GM10248 (cell line): ENCODE measurements at regions of chr1 and their contacts with region 1.

Region 1: DNA sequence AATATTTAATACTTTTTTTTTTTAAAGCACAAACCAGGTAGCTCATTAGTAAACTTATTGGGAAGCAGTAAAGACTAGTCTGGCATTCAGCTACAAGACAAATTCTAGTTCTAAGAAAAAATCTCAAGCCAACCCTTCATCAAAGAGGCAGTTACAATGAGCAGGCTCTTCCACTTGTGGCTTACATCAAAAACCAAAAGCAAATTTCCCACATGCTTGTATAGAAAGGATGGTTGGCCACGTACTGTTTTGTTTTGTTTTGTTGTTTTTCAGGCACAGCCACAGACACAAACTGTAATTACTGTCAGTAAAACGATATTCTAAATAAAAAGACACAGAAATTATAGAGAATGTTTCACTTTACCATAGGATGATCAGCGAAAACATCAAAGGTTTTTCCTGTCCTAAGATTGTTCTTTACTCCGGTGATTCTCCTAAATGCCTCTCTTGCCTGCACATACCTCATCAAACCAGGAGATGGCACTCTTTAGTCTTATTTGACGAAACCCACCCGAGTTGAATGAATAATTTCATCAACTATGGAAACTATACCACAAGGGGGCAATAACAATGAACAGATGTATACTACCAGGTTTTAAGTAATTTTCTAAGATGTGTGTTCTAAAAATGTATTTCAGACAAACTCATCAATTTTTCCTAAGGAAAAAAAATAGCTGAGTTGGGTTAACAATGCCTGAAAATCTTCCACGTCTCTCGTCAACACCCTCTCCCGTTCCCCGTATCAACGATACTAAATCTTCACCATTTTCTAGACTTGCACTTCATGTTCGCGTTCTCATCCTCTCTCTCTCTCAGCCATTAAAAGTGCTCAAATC is 26.9 kb downstream of the RPL5 start:
- DNase-seq: peak; percentile 68
- CTCF ChIP-seq: peak; percentile 90

Region 2: DNA sequence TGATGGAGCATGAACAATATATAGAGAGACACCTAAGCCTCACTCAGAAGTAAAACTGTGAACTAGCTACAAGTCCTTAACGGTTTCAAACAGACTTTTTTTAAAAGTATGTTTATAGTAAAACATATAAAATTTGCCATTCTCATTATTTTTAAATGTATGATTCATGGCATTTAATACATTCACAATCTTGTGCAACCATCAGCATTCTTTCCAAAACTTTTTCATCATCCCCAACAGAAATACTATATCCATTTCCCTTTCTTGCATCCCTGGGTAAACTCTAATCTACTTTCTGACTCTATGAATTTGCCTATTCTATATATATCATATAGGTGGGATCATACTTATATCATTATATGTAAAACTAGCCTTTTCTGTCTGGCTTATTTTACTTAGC is 99.4 kb before region 1 on chr1:
- CTCF ChIA-PET with region 1: no interaction called
- POLR2A ChIA-PET with region 1: no interaction called
- DNase-seq: no peak
- CTCF ChIP-seq: no peak

Region 3: DNA sequence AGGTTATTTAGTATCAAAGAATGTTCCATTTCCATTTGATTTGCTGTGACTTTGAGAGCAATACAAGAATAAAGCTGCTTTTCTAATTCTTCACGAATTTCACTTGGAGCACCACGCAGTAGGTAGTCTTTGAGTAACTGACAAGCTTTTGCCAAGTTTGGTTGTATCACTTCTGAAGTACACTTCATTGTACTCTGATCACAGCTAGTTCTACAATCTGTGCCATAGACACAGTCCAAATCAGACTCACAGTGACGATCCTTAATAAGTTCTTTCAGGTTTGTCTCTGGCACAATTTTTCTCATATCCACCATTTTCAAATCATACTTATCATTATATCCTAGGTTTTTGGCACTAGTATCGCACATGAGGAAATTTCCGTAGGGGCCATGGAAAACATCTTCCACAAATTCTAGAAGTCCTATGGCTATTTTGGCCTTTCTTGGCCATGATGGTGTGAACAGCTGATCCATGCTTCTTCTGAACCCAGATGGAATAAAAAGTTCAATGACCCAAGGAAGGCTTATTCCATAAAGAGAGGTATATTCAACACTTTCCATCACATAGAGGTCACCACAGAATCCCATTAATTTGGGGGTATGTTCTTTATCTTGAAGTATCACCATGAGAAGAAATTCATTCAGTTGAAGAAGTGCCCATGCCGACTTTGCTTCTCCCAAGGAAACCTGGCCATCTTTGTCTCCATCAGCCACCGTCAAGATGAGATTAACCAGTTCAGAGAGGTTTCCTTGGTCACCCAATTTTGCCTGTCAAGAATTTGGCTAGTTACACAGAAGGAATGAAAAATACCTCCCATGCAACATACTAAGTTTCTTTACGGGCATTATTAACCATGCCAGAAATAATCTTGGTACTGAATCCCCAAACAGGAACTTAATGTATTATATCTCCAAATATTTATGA is 15.1 kb before region 1 on chr1:
- CTCF ChIA-PET with region 1: interaction called, 16 read pairs
- POLR2A ChIA-PET with region 1: interaction called, 3 read pairs
- DNase-seq: no peak
- CTCF ChIP-seq: no peak

Region 4: GRCh38 chr1:92882819-92883218 is 24.0 kb after region 1 on chr1:
- CTCF ChIA-PET with region 1: interaction called, 50 read pairs
- POLR2A ChIA-PET with region 1: no interaction called
- DNase-seq: no peak
- CTCF ChIP-seq: no peak

Region 5: GRCh38 chr1:92929461-92929860 is 70.7 kb after region 1 on chr1:
- CTCF ChIA-PET with region 1: interaction called, 21 read pairs
- POLR2A ChIA-PET with region 1: no interaction called
- DNase-seq: peak; percentile 18
- CTCF ChIP-seq: no peak

Region 6: DNA sequence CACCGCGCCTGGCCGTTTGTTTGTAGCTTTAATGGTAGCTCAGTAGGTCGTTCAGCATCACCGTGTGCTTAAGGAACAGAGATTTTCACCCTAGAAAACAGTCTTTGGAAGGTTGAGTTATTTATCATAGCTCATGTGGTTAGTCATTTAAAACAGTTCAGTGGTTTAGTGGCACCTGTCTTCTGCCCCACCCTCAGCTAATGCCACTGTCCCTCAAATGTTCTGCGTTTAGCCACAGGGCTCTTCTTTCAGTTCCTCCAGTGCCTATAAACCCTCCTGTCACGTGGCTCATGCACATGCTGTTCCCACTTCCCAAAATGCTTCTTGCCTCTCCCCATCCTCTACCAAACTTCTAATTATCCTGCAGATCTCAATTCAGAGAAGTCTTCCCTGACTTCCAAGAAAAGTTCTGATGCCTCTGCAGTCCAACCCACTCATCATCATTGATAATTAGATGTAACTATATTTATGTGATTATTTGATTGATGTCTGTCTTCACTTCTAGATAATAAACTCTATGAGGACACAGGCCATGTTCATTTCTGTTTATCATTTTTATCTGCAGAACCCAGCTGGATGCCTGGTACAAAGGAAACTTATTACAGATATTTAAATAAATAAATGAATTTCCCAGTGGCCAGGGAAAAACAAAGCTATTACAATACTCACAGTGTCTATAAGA is 116.9 kb after region 1 on chr1:
- CTCF ChIA-PET with region 1: interaction called, 26 read pairs
- POLR2A ChIA-PET with region 1: no interaction called
- DNase-seq: peak; percentile 58
- CTCF ChIP-seq: no peak

Region 7: DNA sequence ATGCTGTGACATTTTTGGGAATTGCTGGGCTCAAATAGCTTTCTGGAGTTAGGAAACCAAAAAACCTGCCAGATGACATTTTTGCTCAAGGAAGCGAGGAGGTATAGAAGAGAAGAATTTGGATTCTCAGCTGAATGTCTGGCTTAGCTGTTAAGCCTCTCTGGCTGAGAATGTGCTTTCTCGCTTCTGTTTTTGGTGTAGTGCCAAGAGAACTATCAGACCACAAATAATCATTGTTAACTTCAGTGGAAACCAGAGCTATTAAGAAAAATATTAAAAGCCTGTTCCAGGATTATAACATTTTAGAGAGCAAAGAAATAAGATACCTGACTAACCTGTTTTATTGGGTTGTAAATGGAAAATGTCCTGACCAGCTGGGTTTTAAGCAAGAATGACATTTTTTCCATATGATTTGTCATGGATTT is 142.0 kb after region 1 on chr1:
- CTCF ChIA-PET with region 1: interaction called, 20 read pairs
- POLR2A ChIA-PET with region 1: no interaction called
- DNase-seq: no peak
- CTCF ChIP-seq: no peak

Region 8: DNA sequence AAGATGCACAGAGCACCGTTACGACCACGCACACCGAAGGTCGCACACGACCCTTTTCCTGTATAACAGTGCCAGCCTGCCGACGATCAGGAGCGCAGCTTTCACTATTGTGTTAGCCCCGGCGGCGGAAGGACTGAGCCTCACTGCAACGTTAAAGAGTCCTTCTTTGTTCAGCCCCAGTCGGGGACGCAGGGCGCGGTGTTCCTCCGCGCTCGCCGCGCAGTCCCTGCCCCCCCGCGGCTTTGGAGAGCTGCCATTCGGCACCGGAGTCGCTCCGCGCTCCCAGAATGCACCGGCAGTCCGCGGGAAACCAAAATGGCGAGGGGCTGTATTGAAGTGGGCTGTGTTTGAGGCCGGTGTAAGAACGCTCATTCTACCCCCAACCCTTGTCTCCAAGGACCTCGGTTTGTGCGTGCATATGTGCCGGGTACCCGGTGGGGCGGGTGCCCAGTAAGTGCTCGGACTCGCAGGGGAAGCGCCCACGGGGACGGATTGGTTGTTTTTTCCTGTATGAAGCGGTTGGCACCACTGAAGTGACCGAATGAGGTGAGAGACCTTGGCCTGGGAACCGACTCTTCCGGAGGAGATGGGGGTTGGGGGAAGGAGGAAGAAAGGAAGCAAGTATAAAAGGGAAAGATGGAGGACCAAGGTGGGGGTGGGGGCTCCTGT is 220.3 kb after region 1 on chr1 and contains the start of gene MTF2:
- CTCF ChIA-PET with region 1: interaction called, 14 read pairs
- POLR2A ChIA-PET with region 1: no interaction called
- DNase-seq: peak; percentile 91
- CTCF ChIP-seq: no peak